CD8-positive, alpha-beta T cell (primary cell): ENCODE measurements at regions of chr9 and their contacts with region 1.

Region 1: DNA sequence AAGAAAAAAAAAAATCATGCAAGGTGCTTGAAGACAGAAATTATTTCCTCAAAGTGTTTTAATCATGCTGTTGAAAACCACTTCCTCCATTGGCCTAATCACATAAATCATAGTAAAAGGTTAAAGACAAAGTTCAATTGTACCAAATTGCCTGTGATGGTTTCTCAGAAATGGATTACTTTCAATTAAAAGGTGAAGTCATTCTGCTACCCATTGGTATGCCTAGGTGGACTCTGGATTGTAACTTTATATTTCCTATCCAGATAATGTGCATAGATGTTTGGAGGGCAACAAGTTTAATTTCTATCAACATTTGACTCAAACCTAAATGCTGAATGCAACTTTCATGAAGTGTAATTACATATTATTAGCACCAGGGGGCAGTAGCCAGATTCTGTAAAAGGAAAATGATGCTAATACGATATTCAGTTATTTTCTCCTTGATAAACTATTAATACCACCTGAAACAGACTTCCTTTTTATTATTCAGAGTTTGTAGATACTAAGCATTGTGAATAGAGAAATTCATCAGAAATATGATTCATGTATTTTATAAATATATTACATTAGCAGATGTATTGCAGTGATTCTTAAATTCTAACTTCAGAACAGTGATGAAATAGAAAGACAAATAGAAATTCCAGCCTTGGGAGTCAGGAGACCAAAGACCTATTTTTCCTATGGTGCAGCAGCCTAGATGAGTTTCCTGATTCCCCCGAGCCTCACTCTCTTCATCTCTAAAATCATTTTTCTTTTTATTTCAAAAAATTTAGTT is 148.2 kb downstream of the CAAP1 start:
- DNase-seq: peak in 2 of 9 experiments; percentile 20 to 32
- ATAC-seq: no peak
- H3K4me3 ChIP-seq: no peak overlapping the region
- H3K4me3 Mint-ChIP-seq: no peak overlapping the region
- H3K27ac ChIP-seq: no peak overlapping the region
- H3K27ac Mint-ChIP-seq: no peak overlapping the region
- H3K4me1 ChIP-seq: no peaks in the 10 kb centered on the region
- H3K4me1 Mint-ChIP-seq: peaks cover 3% of the 10 kb centered on the region
- H3K27me3 ChIP-seq: no peaks in the 10 kb centered on the region
- H3K27me3 Mint-ChIP-seq: no peaks in the 10 kb centered on the region
- CTCF ChIP-seq: peak; percentile 91

Region 2: GRCh38 chr9:26863074-26863473 is 118.7 kb after region 1 on chr9:
- CTCF ChIA-PET with region 1: no interaction called
- POLR2A ChIA-PET with region 1: no interaction called
- intact Hi-C with region 1: loop called (anchors 10 kb)
- DNase-seq: no peak
- ATAC-seq: no peak
- H3K4me3 ChIP-seq: no peak overlapping the region
- H3K4me3 Mint-ChIP-seq: no peak overlapping the region
- H3K27ac ChIP-seq: no peak overlapping the region
- H3K27ac Mint-ChIP-seq: no peak overlapping the region
- H3K4me1 ChIP-seq: no peaks in the 10 kb centered on the region
- H3K4me1 Mint-ChIP-seq: no peaks in the 10 kb centered on the region
- H3K27me3 ChIP-seq: no peaks in the 10 kb centered on the region
- H3K27me3 Mint-ChIP-seq: no peaks in the 10 kb centered on the region
- CTCF ChIP-seq: no peak

Region 3: GRCh38 chr9:26975693-26976059 is 231.3 kb after region 1 on chr9:
- CTCF ChIA-PET with region 1: interaction called, 3 read pairs
- POLR2A ChIA-PET with region 1: no interaction called
- intact Hi-C with region 1: loop called in 1 of 2 experiments (anchors 1 kb)
- DNase-seq: peak in 2 of 9 experiments; percentile 31 to 40
- ATAC-seq: no peak
- H3K4me3 ChIP-seq: no peak overlapping the region
- H3K4me3 Mint-ChIP-seq: no peak overlapping the region
- H3K27ac ChIP-seq: no peak overlapping the region
- H3K27ac Mint-ChIP-seq: no peak overlapping the region
- H3K4me1 ChIP-seq: no peaks in the 10 kb centered on the region
- H3K4me1 Mint-ChIP-seq: no peaks in the 10 kb centered on the region
- H3K27me3 ChIP-seq: no peaks in the 10 kb centered on the region
- H3K27me3 Mint-ChIP-seq: no peaks in the 10 kb centered on the region
- CTCF ChIP-seq: peak; percentile 23